CD4-positive, alpha-beta T cell (primary cell): ENCODE measurements at regions of chr7 and their contacts with region 1.

Region 1: DNA sequence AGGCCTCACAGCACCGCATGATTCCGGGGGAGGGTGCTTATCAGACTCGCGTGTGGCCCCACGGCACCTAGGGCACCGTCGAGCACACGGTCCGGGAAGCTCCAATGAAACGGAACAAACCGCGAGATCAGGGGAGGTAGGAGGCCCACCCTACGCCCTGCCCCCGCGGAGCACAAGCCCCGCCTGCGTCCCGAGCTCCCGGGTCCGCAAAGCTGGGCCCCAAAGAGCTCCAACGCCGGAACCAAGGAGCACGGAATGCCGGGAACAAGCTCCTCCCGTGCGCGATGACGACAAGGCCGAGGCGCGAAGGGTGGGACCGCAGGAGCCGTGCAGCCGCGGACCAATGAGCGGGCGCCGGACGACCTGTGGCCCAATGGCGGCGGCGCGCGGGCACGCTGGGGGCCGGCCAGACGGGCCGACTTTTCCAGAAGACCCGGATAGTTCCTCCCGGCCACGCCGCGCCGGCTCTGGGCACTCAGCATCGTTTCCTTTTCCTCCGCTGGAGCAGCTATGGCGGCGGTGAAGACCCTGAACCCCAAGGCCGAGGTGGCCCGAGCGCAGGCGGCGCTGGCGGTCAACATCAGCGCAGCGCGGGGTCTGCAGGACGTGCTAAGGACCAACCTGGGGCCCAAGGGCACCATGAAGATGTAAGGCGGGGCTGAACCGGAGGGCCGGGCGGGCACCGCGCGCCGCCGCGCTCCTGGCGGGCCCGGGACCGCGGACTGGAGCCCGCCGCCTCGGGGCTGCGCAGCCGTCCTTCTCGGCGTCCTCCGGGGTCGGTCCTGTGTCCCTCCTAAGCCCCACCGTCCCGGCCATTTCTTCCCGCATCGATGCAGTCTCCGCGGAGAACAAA is at the starts of genes CCT6A and PSPH:
- DNase-seq: peak; percentile 66 to 95 (median 86)
- ATAC-seq: peak; percentile 86
- H3K4me3 ChIP-seq: peak within 1 kb of the TSS; percentile 74
- H3K4me3 Mint-ChIP-seq: peak within 1 kb of the TSS; percentile 93
- H3K27ac ChIP-seq: peak within 1 kb of the TSS; percentile 66 to 81
- H3K27ac Mint-ChIP-seq: peak within 1 kb of the TSS; percentile 83
- H3K4me1 ChIP-seq: peaks cover 27% of the 10 kb centered on the region
- H3K4me1 Mint-ChIP-seq: peaks cover 54% of the 10 kb centered on the region
- H3K27me3 ChIP-seq: no peaks in the 10 kb centered on the region
- H3K27me3 Mint-ChIP-seq: no peaks in the 10 kb centered on the region
- CTCF ChIP-seq: no peak
- total RNA-seq, gene CCT6A: 31.8 to 33.0 TPM
- total RNA-seq, gene PSPH: 1.2 to 1.9 TPM

Region 2: DNA sequence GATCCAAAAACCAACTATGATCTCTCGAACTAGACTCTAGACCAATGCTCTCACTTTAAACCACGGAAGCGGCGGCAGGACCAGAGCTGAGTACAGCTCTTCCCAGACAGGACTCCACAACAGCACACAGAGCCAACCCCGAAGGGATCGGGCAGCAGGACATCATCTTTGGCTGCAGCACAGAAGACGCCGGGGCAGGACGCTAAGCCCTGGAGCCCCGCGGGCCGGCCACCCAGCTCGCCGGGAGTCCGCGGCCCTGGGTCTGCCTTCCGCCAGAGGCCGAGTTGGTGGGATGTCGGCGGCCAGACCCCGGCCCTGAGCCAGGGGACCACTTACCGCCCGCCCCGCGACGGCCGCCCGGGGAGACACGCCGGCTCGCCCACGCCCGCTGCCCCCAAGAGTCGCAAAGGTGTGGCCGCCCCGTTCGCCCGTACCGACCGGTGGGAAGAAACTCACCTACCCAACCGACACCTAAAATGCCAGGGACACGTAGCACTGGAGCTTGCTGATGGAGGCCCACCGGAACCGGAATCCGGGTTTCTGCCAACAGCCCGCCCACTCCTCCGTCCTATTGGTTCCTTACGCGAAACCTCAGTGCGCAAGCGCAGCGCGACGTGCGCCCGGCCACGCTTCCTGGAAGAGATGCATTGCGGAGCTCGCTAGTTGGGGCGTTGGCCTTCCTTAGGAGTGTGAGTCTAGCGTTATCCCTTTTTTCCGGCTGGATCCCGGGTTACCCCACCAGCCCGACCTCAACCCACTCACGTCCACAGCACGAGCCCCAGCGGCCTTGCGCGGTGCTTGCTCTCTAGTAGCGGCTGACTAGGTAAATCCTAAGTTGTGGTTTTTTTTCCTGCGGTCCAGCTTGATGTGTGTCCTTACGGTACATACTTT is 1292.6 kb before region 1 on chr7 and contains the start of gene SEC61G:
- CTCF ChIA-PET with region 1: no interaction called
- POLR2A ChIA-PET with region 1: no interaction called
- intact Hi-C with region 1: loop called in 1 of 2 experiments (anchors 10 kb)
- DNase-seq: peak; percentile 91 to 98 (median 93)
- ATAC-seq: peak; percentile 97
- H3K4me3 ChIP-seq: peak within 1 kb of the TSS; percentile 69
- H3K4me3 Mint-ChIP-seq: peak within 1 kb of the TSS; percentile 96
- H3K27ac ChIP-seq: peak within 1 kb of the TSS; percentile 63 to 73
- H3K27ac Mint-ChIP-seq: peak within 1 kb of the TSS; percentile 95
- H3K4me1 ChIP-seq: peaks cover 21% of the 10 kb centered on the region
- H3K4me1 Mint-ChIP-seq: peaks cover 54% of the 10 kb centered on the region
- H3K27me3 ChIP-seq: no peaks in the 10 kb centered on the region
- H3K27me3 Mint-ChIP-seq: no peaks in the 10 kb centered on the region
- CTCF ChIP-seq: no peak
- total RNA-seq, gene SEC61G: 43.9 to 51.3 TPM

Region 3: DNA sequence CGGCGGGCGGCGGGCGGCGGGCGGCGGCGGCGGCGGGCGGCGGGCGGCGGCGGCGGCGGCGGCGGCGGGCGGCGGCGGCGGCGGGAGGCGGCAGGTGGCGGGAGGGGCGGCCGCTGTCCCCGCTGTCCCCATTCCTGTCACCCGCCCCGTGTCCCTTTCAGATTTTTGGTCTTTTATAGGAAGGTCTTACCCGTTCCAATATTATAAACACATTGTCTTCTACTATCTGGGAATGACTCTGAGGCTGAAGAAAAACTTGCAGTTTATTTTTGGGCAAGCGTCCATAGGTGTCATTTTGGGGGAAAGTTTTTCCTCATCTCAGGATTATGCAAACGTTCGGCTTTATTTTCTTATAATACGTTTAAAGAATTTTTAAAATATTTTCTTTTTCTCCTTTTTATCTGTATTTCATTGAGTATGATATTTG is 163.7 kb before region 1 on chr7:
- CTCF ChIA-PET with region 1: no interaction called
- POLR2A ChIA-PET with region 1: no interaction called
- intact Hi-C with region 1: loop called in 1 of 2 experiments (anchors 5 kb)
- DNase-seq: peak in 1 of 14 experiments; percentile 1
- ATAC-seq: peak; percentile 12
- H3K4me3 ChIP-seq: peak overlapping the region; percentile 60
- H3K4me3 Mint-ChIP-seq: peak overlapping the region; percentile 90
- H3K27ac ChIP-seq: no peak overlapping the region
- H3K27ac Mint-ChIP-seq: peak overlapping the region; percentile 90
- H3K4me1 ChIP-seq: peaks cover 13% of the 10 kb centered on the region
- H3K4me1 Mint-ChIP-seq: peaks cover 6% of the 10 kb centered on the region
- H3K27me3 ChIP-seq: no peaks in the 10 kb centered on the region
- H3K27me3 Mint-ChIP-seq: no peaks in the 10 kb centered on the region
- CTCF ChIP-seq: no peak

Region 4: GRCh38 chr7:55951637-55952351 is 99.8 kb before region 1 on chr7 and contains the start of gene MRPS17:
- CTCF ChIA-PET with region 1: no interaction called
- POLR2A ChIA-PET with region 1: no interaction called
- intact Hi-C with region 1: loop called in 1 of 2 experiments (anchors 5 kb)
- DNase-seq: peak; percentile 82 to 97 (median 91)
- ATAC-seq: peak; percentile 99
- H3K4me3 ChIP-seq: peak within 1 kb of the TSS; percentile 96
- H3K4me3 Mint-ChIP-seq: peak within 1 kb of the TSS; percentile 94
- H3K27ac ChIP-seq: peak within 1 kb of the TSS; percentile 76 to 89
- H3K27ac Mint-ChIP-seq: peak within 1 kb of the TSS; percentile 92
- H3K4me1 ChIP-seq: peaks cover 13% of the 10 kb centered on the region
- H3K4me1 Mint-ChIP-seq: peaks cover 26% of the 10 kb centered on the region
- H3K27me3 ChIP-seq: no peaks in the 10 kb centered on the region
- H3K27me3 Mint-ChIP-seq: no peaks in the 10 kb centered on the region
- CTCF ChIP-seq: no peak
- total RNA-seq, gene MRPS17: 6.7 to 6.9 TPM

Region 5: DNA sequence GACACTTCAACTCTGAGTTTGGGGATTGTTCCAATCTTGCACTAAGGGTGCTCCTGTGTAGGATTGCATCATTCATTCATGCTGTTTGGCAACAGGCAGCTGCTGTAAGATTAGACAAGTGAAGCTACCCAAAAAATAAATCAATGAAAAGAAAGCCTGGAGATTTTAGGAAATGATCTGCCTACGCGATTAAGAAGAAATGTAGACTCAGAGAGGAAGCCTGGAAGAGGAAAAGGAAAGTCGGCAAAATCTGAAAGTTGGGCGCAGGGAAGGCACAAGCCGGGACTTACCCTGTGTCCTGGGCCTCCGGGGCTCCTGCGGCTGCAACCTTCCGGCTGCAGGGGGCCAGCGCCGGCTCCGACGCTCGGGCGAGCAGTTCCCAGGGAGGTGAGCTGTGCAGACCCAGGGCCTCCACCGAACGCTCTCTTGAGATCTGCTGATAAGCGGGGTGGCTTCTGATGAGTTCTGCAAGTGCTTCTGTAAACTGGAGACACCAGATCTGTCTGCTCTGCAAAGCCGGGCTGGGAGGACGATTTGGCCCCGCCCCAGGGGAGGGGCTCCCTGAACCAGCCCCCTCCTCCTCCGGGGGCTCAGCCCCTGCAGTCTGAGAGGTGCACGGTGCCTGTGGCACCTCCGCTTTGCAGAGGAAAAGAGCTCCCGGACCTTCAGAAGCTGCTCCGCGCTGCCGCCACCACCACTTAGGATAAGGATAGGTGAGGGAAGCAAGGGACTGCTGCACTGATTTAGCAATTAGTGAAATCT is 17.7 kb before region 1 on chr7:
- CTCF ChIA-PET with region 1: no interaction called
- POLR2A ChIA-PET with region 1: interaction called, 17 read pairs
- intact Hi-C with region 1: loop called (anchors 2 kb)
- DNase-seq: peak; percentile 52 to 87 (median 70)
- ATAC-seq: peak; percentile 98
- H3K4me3 ChIP-seq: peak overlapping the region; percentile 67
- H3K4me3 Mint-ChIP-seq: peak overlapping the region; percentile 85
- H3K27ac ChIP-seq: peak overlapping the region in 1 of 2 donors; percentile 30
- H3K27ac Mint-ChIP-seq: peak overlapping the region; percentile 36
- H3K4me1 ChIP-seq: peaks cover 12% of the 10 kb centered on the region
- H3K4me1 Mint-ChIP-seq: peaks cover 6% of the 10 kb centered on the region
- H3K27me3 ChIP-seq: no peaks in the 10 kb centered on the region
- H3K27me3 Mint-ChIP-seq: no peaks in the 10 kb centered on the region
- CTCF ChIP-seq: peak; percentile 37

Region 6: GRCh38 chr7:56063882-56064625 is 12.5 kb after region 1 on chr7 and contains the start of gene SUMF2:
- CTCF ChIA-PET with region 1: interaction called, 12 read pairs
- POLR2A ChIA-PET with region 1: interaction called, 55 read pairs
- intact Hi-C with region 1: loop called (anchors 1 kb)
- DNase-seq: peak; percentile 81 to 97 (median 89)
- ATAC-seq: peak; percentile 89
- H3K4me3 ChIP-seq: peak within 1 kb of the TSS; percentile 95
- H3K4me3 Mint-ChIP-seq: peak within 1 kb of the TSS; percentile 93
- H3K27ac ChIP-seq: peak within 1 kb of the TSS; percentile 82 to 84
- H3K27ac Mint-ChIP-seq: peak within 1 kb of the TSS; percentile 95
- H3K4me1 ChIP-seq: peaks cover 25% of the 10 kb centered on the region
- H3K4me1 Mint-ChIP-seq: peaks cover 31% of the 10 kb centered on the region
- H3K27me3 ChIP-seq: no peaks in the 10 kb centered on the region
- H3K27me3 Mint-ChIP-seq: no peaks in the 10 kb centered on the region
- CTCF ChIP-seq: no peak
- total RNA-seq, gene SUMF2: 95.8 to 102 TPM